ENCODE measurements at regions of chr9 and their contacts with region 1.

Region 1: DNA sequence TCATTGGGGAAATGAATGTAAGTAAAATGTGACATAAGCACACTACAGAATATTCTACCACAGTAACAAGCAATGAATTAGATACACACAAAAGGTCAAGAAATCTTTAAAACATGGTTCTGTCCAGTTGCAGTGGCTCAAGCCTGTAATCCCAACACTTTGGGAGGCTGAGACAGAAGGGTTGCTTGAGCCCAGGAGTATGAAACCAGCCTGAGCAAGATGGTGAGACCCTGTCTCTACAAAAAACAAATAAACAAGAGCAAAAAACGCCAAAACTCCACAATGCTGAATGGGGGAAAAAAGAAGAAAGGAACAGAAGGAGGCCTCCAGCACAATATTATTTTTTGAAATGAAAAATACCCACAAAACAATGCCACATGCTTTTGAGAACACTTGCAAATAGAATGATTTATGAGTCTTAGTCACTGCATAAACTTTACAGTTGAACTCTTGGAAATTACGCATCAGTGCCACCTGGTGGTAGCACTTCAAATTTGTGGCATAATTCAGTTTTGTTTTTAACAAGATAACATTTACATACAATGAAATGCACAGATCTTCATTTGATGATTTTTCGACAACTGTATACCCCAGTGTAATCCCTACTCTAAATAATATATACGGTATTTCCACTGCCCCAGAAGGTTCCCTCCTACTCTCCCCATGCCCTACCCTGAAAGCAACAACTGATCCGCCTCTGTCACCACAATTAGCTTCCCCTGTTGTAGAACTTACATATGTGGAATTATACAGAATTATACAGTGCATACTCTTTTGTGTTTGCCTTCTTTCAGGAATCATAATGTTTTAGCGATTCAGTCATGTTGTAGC is 14.4 kb upstream of the SPINK4 start:
- DNase-seq: peak; percentile 91
- H3K4me3 ChIP-seq: no peak overlapping the region
- H3K27ac ChIP-seq: no peak overlapping the region
- H3K4me1 ChIP-seq: peaks cover 9% of the 10 kb centered on the region
- H3K27me3 ChIP-seq: no peaks in the 10 kb centered on the region
- CTCF ChIP-seq: peak; percentile 41 to 55
- POLR2A ChIP-seq: no peak

Region 2: GRCh38 chr9:31412081-31412480 is 1813.5 kb before region 1 on chr9:
- CTCF ChIA-PET with region 1: no interaction called
- POLR2A ChIA-PET with region 1: no interaction called
- dilution Hi-C with region 1: no loop called
- intact Hi-C with region 1: no loop called
- DNase-seq: no peak
- H3K4me3 ChIP-seq: no peak overlapping the region
- H3K27ac ChIP-seq: no peak overlapping the region
- H3K4me1 ChIP-seq: no peaks in the 10 kb centered on the region
- H3K27me3 ChIP-seq: no peaks in the 10 kb centered on the region
- CTCF ChIP-seq: no peak
- POLR2A ChIP-seq: no peak

Region 3: GRCh38 chr9:33044127-33044673 is 181.3 kb before region 1 on chr9:
- CTCF ChIA-PET with region 1: interaction called, 10 read pairs
- POLR2A ChIA-PET with region 1: no interaction called
- dilution Hi-C with region 1: no loop called
- intact Hi-C with region 1: loop called (anchors 1 kb)
- DNase-seq: peak; percentile 92
- H3K4me3 ChIP-seq: peak overlapping the region; percentile 51 to 74 (median 65)
- H3K27ac ChIP-seq: peak overlapping the region; percentile 81
- H3K4me1 ChIP-seq: peaks cover 11% of the 10 kb centered on the region
- H3K27me3 ChIP-seq: no peaks in the 10 kb centered on the region
- CTCF ChIP-seq: no peak
- POLR2A ChIP-seq: peak; percentile 80

Region 4: DNA sequence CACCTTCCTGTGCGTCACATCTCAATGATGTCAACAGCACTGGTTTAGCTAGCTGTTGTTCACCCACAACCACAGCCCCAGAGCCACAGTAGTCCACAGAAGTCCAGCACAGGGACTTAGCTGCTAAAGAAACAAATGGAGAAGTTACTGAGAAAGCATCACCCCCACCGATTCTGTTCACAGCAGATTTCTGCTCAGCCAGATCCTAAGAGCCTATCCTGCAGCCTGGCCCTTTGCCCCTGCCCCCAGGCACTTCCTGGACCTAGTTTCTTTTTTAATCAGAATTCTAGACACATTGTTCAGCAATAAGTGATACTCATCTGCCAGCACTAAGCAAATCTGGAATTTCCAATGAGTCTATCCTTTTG is 65.8 kb before region 1 on chr9:
- CTCF ChIA-PET with region 1: interaction called, 12 read pairs
- POLR2A ChIA-PET with region 1: no interaction called
- dilution Hi-C with region 1: no loop called
- intact Hi-C with region 1: loop called (anchors 1 kb)
- DNase-seq: peak; percentile 73
- H3K4me3 ChIP-seq: no peak overlapping the region
- H3K27ac ChIP-seq: peak overlapping the region; percentile 97
- H3K4me1 ChIP-seq: peaks cover 62% of the 10 kb centered on the region
- H3K27me3 ChIP-seq: no peaks in the 10 kb centered on the region
- CTCF ChIP-seq: no peak
- POLR2A ChIP-seq: no peak